Mammary epithelial cell (primary cell): ENCODE measurements at regions of chr15 and their contacts with region 1.

Region 1: DNA sequence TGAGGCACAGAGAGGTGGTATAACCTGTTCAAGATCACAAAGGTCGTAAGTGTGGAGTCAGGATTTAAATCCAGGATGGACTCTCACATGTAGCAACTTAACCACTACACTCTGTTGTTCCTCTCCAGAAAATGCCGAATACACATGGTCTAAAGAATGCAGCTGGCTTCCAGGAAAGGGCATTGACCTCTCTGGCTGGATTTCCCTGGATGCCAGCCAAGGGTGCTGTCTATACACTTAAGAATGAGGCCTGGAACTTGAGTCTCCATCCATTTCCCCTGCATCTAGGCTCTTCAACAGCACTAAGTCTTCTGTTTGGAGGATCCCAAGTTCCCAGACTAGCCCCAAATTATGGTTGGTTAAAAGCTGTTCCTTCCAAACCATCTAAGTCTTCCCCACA is 60.5 kb downstream of the CERS3 start:
- DNase-seq: no peak
- H3K4me3 ChIP-seq: no peak overlapping the region
- H3K27ac ChIP-seq: no peak overlapping the region
- H3K4me1 ChIP-seq: no peaks in the 10 kb centered on the region
- H3K27me3 ChIP-seq: no peaks in the 10 kb centered on the region
- CTCF ChIP-seq: no peak

Region 2: GRCh38 chr15:100405179-100405578 is 63.1 kb before region 1 on chr15:
- CTCF ChIA-PET with region 1: no interaction called
- dilution Hi-C with region 1: loop called (anchors 10 kb)
- in situ Hi-C with region 1: no loop called
- intact Hi-C with region 1: no loop called
- DNase-seq: no peak
- H3K4me3 ChIP-seq: no peak overlapping the region
- H3K27ac ChIP-seq: no peak overlapping the region
- H3K4me1 ChIP-seq: no peaks in the 10 kb centered on the region
- H3K27me3 ChIP-seq: no peaks in the 10 kb centered on the region
- CTCF ChIP-seq: no peak